ENCODE measurements at regions of chr14 and their contacts with region 1.

Region 1: GRCh38 chr14:93655078-93655750 is 133.1 kb downstream of the PRIMA1 start:
- DNase-seq: peak; percentile 3
- ATAC-seq: peak; percentile 50; the same call in 2 of the 3 replicates
- H3K4me3 ChIP-seq: no peak overlapping the region
- H3K27ac ChIP-seq: no peak overlapping the region
- H3K4me1 ChIP-seq: no peaks in the 10 kb centered on the region
- H3K27me3 ChIP-seq: no peaks in the 10 kb centered on the region
- CTCF ChIP-seq: peak; percentile 30 to 58 (median 58); a peak in 5 of 6 replicates
- EP300 ChIP-seq: no peak
- POLR2A ChIP-seq: no peak
- RAD21 ChIP-seq: peak; percentile 61

Region 2: GRCh38 chr14:93645200-93645599 is 10.0 kb before region 1 on chr14:
- CTCF ChIA-PET with region 1: interaction called, 12 read pairs
- POLR2A ChIA-PET with region 1: no interaction called
- RAD21 ChIA-PET with region 1: no interaction called
- SMC1A ChIA-PET with region 1: interaction called, 9 read pairs
- in situ Hi-C with region 1: no loop called
- intact Hi-C with region 1: no loop called
- DNase-seq: no peak
- ATAC-seq: no peak
- H3K4me3 ChIP-seq: no peak overlapping the region
- H3K27ac ChIP-seq: no peak overlapping the region
- H3K4me1 ChIP-seq: no peaks in the 10 kb centered on the region
- H3K27me3 ChIP-seq: no peaks in the 10 kb centered on the region
- CTCF ChIP-seq: no peak
- EP300 ChIP-seq: no peak
- POLR2A ChIP-seq: no peak
- RAD21 ChIP-seq: no peak

Region 3: DNA sequence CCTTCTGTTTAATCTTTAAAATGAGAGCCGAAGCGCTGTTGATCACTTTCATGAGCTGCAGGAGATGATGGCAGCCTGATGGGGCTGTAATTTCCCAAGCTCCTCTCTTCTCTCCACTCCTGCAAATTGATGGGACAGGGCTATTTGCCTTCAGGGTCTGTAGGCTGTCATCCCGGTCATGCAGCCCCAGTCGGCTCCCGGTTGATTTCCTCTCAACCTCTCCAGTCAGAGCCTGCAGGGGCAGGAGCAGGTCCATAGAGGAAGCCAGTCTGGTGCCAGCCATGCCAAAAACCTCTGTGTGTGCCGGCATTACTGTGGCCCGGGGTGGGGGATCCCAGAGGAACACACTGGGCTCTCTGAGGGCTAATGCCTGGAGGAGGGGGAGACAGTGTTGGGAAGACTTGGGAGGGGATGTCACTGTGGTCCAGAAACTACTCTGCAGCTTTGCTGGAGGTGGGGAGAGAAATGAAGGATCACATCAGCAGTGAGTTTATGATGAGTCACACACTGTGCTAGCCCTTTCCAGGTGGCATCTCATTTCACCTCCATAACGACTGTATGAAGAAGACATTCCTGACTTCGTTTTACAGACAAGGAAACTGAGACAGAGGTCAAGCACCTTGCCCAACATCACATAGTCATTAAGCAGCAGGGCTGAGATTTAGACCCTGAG is 179.6 kb after region 1 on chr14:
- CTCF ChIA-PET with region 1: no interaction called
- POLR2A ChIA-PET with region 1: no interaction called
- RAD21 ChIA-PET with region 1: no interaction called
- SMC1A ChIA-PET with region 1: no interaction called
- in situ Hi-C with region 1: no loop called
- intact Hi-C with region 1: no loop called
- DNase-seq: no peak
- ATAC-seq: no peak
- H3K4me3 ChIP-seq: no peak overlapping the region
- H3K27ac ChIP-seq: no peak overlapping the region
- H3K4me1 ChIP-seq: no peaks in the 10 kb centered on the region
- H3K27me3 ChIP-seq: peaks cover 0 to 2% of the 10 kb centered on the region in 2 experiments; a peak in 2 of 4 replicates
- CTCF ChIP-seq: no peak
- EP300 ChIP-seq: no peak
- POLR2A ChIP-seq: no peak
- RAD21 ChIP-seq: no peak

Region 4: GRCh38 chr14:93892923-93893558 is 237.8 kb after region 1 on chr14:
- CTCF ChIA-PET with region 1: interaction called, 55 read pairs
- POLR2A ChIA-PET with region 1: no interaction called
- RAD21 ChIA-PET with region 1: interaction called, 3 read pairs
- SMC1A ChIA-PET with region 1: interaction called, 5 read pairs
- in situ Hi-C with region 1: no loop called
- intact Hi-C with region 1: loop called (anchors 1 kb)
- DNase-seq: no peak
- ATAC-seq: peak; percentile 90
- H3K4me3 ChIP-seq: no peak overlapping the region
- H3K27ac ChIP-seq: no peak overlapping the region
- H3K4me1 ChIP-seq: no peaks in the 10 kb centered on the region
- H3K27me3 ChIP-seq: peaks cover 6 to 12% of the 10 kb centered on the region in 2 experiments
- CTCF ChIP-seq: peak; percentile 82 to 99 (median 98)
- EP300 ChIP-seq: no peak
- POLR2A ChIP-seq: no peak
- RAD21 ChIP-seq: peak; percentile 75

Region 5: GRCh38 chr14:93906341-93907329 is 251.4 kb after region 1 on chr14:
- CTCF ChIA-PET with region 1: interaction called, 17 read pairs
- POLR2A ChIA-PET with region 1: no interaction called
- RAD21 ChIA-PET with region 1: interaction called, 7 read pairs
- SMC1A ChIA-PET with region 1: interaction called, 3 read pairs
- in situ Hi-C with region 1: loop called (anchors 5 kb)
- intact Hi-C with region 1: loop called (anchors 5 kb)
- DNase-seq: no peak
- ATAC-seq: peak; percentile 98
- H3K4me3 ChIP-seq: no peak overlapping the region
- H3K27ac ChIP-seq: no peak overlapping the region
- H3K4me1 ChIP-seq: no peaks in the 10 kb centered on the region
- H3K27me3 ChIP-seq: peaks cover 1 to 2% of the 10 kb centered on the region in 2 experiments; a peak in 2 of 4 replicates
- CTCF ChIP-seq: peak; percentile 81 to 86 (median 83)
- EP300 ChIP-seq: no peak
- POLR2A ChIP-seq: no peak
- RAD21 ChIP-seq: peak; percentile 78

Region 6: GRCh38 chr14:94322648-94323570 is 667.7 kb after region 1 on chr14 and contains the start of gene SERPINA6:
- CTCF ChIA-PET with region 1: no interaction called
- POLR2A ChIA-PET with region 1: no interaction called
- RAD21 ChIA-PET with region 1: no interaction called
- SMC1A ChIA-PET with region 1: no interaction called
- in situ Hi-C with region 1: no loop called
- intact Hi-C with region 1: no loop called
- DNase-seq: no peak
- ATAC-seq: peak; percentile 61
- H3K4me3 ChIP-seq: no peak within 1 kb of the TSS
- H3K27ac ChIP-seq: no peak within 1 kb of the TSS
- H3K4me1 ChIP-seq: no peaks in the 10 kb centered on the region
- H3K27me3 ChIP-seq: no peaks in the 10 kb centered on the region
- CTCF ChIP-seq: no peak
- EP300 ChIP-seq: no peak
- POLR2A ChIP-seq: no peak
- RAD21 ChIP-seq: no peak
- polyA plus RNA-seq, gene SERPINA6: not detected

Measured in GM12878 (cell line).